PC-9 (cell line): ENCODE measurements at regions of chr20 and their contacts with region 1.

Region 1: DNA sequence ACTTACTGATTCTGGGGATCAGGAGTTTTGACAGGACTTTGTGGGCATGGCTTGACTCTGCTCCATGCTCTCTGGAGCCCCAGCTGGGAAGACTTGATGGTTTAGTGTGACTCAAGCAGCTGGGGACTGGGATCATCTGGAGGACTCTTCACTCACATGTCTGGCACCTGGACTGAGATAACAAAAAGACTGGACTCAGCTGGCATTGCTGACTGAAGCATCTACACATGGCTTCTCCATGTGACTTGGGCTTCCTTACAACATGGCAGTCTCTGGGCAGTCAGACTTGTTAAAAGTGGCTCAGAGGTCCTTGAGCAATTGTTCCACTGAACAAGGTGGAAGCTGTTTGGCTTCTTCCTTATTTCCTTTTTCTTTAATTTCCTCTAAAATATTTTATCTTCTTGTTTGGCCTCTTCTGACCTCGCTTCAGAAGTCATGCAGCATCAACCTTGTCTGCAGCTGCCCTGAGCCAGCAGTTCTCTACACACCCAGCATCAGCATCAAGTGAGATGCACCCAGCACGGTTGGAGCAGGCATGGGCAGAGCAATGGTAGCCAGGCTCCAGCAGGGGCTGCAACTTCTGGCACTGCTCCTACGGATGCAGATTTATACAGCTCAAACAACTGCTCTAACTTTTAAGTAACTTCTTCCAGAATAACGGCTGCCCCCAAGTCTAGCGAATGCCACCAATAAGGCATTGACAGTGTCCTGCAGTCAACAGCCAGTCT is 5.6 kb upstream of the HM13 start:
- DNase-seq: no peak
- H3K4me3 ChIP-seq: no peak overlapping the region
- H3K27ac ChIP-seq: no peak overlapping the region
- H3K4me1 ChIP-seq: peaks cover 12% of the 10 kb centered on the region
- H3K27me3 ChIP-seq: no peaks in the 10 kb centered on the region
- CTCF ChIP-seq: no peak

Region 2: GRCh38 chr20:31572701-31573554 is 64.2 kb after region 1 on chr20:
- CTCF ChIA-PET with region 1: no interaction called
- POLR2A ChIA-PET with region 1: interaction called, 18 read pairs
- intact Hi-C with region 1: no loop called
- DNase-seq: peak; percentile 95 to 100
- H3K4me3 ChIP-seq: peak overlapping the region; percentile 64
- H3K27ac ChIP-seq: peak overlapping the region; percentile 96
- H3K4me1 ChIP-seq: peaks cover 46% of the 10 kb centered on the region
- H3K27me3 ChIP-seq: no peaks in the 10 kb centered on the region
- CTCF ChIP-seq: no peak